ENCODE measurements at regions of chr13 and their contacts with region 1.

Region 1: DNA sequence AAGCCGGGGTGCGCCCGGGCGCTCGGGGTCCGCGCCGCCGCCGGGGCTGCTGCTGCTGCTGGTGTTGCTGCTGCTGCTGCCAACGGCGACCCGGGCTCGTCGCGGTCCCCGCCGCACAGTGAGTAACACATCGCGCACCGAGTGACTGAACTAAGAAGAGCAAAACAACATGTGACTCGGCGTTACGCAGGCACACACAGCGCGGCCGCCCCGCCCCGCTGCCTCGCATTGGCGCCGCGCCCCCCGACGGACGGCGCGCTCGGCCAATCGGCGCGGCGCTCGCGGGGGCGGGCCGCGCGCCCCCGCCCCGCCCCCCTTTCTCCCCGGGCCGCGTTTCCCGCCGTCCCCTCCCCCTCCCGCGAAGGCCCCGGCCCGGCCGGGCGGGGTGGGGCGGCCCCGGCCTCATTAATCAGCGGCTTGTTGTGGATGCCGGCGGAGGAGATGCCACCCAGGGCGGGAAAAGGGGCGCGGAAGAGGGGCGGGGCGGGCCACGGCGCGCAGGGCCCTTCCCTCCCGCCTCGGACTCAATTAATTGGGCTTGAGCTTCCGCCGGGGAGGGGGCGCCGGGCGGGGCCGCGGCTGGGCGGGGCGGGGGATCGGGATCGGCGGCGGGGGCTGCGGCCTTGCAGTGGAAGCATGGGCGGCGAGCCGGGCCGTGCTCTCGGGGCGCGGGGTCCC is at the start of gene IRS2:
- DNase-seq: peak; percentile 90
- ATAC-seq: peak; percentile 82
- H3K4me3 ChIP-seq: peak within 1 kb of the TSS; percentile 92
- H3K27ac ChIP-seq: peak within 1 kb of the TSS; percentile 87
- H3K4me1 ChIP-seq: peaks cover 7% of the 10 kb centered on the region
- H3K27me3 ChIP-seq: peaks cover 2% of the 10 kb centered on the region; the same call in 1 of the 2 replicates
- CTCF ChIP-seq: no peak
- POLR2A ChIP-seq: peak; percentile 96
- RAD21 ChIP-seq: no peak
- total RNA-seq, gene IRS2: 0.36 and 0.83 TPM in 2 replicates

Region 2: DNA sequence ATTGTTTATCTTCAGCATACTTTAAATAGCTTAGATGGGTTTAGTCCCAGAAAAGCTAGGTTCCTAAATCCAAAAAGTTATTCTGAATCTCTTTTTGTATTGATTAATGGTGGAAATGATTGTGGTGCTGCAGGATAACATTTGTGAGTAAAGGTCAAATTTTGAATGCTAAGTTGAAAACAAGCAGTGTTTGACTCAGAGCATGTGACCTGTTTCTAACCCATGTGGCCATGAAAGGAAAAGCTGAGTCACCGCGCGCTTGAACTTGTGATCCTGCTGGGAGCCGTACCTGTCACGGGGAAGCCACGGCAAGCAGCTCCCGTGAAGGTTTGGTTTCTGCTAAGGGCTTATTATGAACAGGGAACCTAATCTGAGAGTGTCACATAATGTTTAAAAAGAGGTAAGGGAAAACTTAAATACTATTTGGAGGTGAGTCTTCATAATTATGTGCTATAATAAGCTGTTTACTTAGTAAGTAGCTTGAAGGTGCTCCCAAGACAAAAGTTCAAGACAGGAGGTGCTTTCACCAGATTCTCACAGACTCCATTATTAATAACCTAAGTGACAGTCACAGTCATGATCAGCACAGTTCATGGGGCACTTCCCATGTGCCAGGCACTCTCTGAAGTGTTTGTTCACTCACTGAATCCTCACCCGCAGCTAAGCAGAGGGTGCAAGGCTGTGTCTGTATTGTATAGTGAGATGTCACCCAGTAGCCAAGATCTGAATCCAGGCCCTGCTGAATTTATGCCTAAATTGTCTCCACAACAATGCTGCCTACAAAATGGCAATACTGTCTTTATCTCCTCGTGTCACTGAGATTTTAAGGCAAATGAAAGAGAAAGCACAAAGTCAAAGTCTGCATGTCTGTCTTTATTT is 870.7 kb before region 1 on chr13:
- CTCF ChIA-PET with region 1: no interaction called
- POLR2A ChIA-PET with region 1: no interaction called
- dilution Hi-C with region 1: no loop called
- in situ Hi-C with region 1: no loop called
- intact Hi-C with region 1: loop called (anchors 5 kb)
- DNase-seq: peak; percentile 88
- ATAC-seq: peak; percentile 47
- H3K4me3 ChIP-seq: no peak overlapping the region
- H3K27ac ChIP-seq: peak overlapping the region; percentile 12; the same call in 1 of the 2 replicates
- H3K4me1 ChIP-seq: peaks cover 13% of the 10 kb centered on the region
- H3K27me3 ChIP-seq: peaks cover 7% of the 10 kb centered on the region
- CTCF ChIP-seq: no peak
- POLR2A ChIP-seq: no peak
- RAD21 ChIP-seq: no peak

Region 3: GRCh38 chr13:108961542-108962125 is 825.0 kb before region 1 on chr13:
- CTCF ChIA-PET with region 1: interaction called, 4 read pairs
- POLR2A ChIA-PET with region 1: no interaction called
- dilution Hi-C with region 1: no loop called
- in situ Hi-C with region 1: no loop called
- intact Hi-C with region 1: loop called (anchors 2 kb)
- DNase-seq: peak; percentile 62
- ATAC-seq: peak; percentile 56
- H3K4me3 ChIP-seq: no peak overlapping the region
- H3K27ac ChIP-seq: no peak overlapping the region
- H3K4me1 ChIP-seq: peaks cover 11% of the 10 kb centered on the region
- H3K27me3 ChIP-seq: no peaks in the 10 kb centered on the region
- CTCF ChIP-seq: peak; percentile 88
- POLR2A ChIP-seq: no peak
- RAD21 ChIP-seq: peak; percentile 94

Region 4: GRCh38 chr13:109156181-109156935 is 630.2 kb before region 1 on chr13:
- CTCF ChIA-PET with region 1: no interaction called
- POLR2A ChIA-PET with region 1: no interaction called
- dilution Hi-C with region 1: no loop called
- in situ Hi-C with region 1: loop called (anchors 5 kb)
- intact Hi-C with region 1: no loop called
- DNase-seq: peak; percentile 86
- ATAC-seq: peak; percentile 81
- H3K4me3 ChIP-seq: no peak overlapping the region
- H3K27ac ChIP-seq: peak overlapping the region; percentile 99
- H3K4me1 ChIP-seq: peaks cover 25% of the 10 kb centered on the region
- H3K27me3 ChIP-seq: no peaks in the 10 kb centered on the region
- CTCF ChIP-seq: no peak
- POLR2A ChIP-seq: no peak
- RAD21 ChIP-seq: no peak

Region 5: GRCh38 chr13:110012102-110012739 is 225.6 kb after region 1 on chr13:
- CTCF ChIA-PET with region 1: no interaction called
- POLR2A ChIA-PET with region 1: no interaction called
- dilution Hi-C with region 1: no loop called
- in situ Hi-C with region 1: no loop called
- intact Hi-C with region 1: loop called (anchors 5 kb)
- DNase-seq: peak; percentile 97
- ATAC-seq: peak; percentile 88
- H3K4me3 ChIP-seq: no peak overlapping the region
- H3K27ac ChIP-seq: peak overlapping the region; percentile 70
- H3K4me1 ChIP-seq: peaks cover 19% of the 10 kb centered on the region
- H3K27me3 ChIP-seq: no peaks in the 10 kb centered on the region
- CTCF ChIP-seq: no peak
- POLR2A ChIP-seq: no peak
- RAD21 ChIP-seq: 0 out of 2 replicates have a peak, but pooled peaks have one; percentile 7

Region 6: GRCh38 chr13:110116072-110116487 is 329.5 kb after region 1 on chr13:
- CTCF ChIA-PET with region 1: no interaction called
- POLR2A ChIA-PET with region 1: no interaction called
- dilution Hi-C with region 1: loop called (anchors 25 kb)
- in situ Hi-C with region 1: no loop called
- intact Hi-C with region 1: no loop called
- DNase-seq: peak; percentile 60
- ATAC-seq: peak; percentile 76
- H3K4me3 ChIP-seq: no peak overlapping the region
- H3K27ac ChIP-seq: no peak overlapping the region
- H3K4me1 ChIP-seq: peaks cover 23% of the 10 kb centered on the region
- H3K27me3 ChIP-seq: no peaks in the 10 kb centered on the region
- CTCF ChIP-seq: peak; percentile 72
- POLR2A ChIP-seq: no peak
- RAD21 ChIP-seq: peak; percentile 78